Ovary (tissue), 10 donors: ENCODE measurements at regions of chr9 and their contacts with region 1.

Region 1: GRCh38 chr9:34328987-34329832 is at the starts of genes KIF24 and NUDT2:
- DNase-seq: peak; percentile 94 to 98 (median 95)
- H3K4me3 ChIP-seq: peak within 1 kb of the TSS; percentile 68
- H3K27ac ChIP-seq: peak within 1 kb of the TSS; percentile 76 to 85
- H3K4me1 ChIP-seq: no peaks in the 10 kb centered on the region
- H3K27me3 ChIP-seq: no peaks in the 10 kb centered on the region
- CTCF ChIP-seq: no peak
- EP300 ChIP-seq: no peak
- POLR2A ChIP-seq: peak; percentile 62
- total RNA-seq, gene KIF24: 0.53 to 3.2 (median 1.00) TPM
- total RNA-seq, gene NUDT2: 14.8 to 41.4 (median 24.8) TPM

Region 2: DNA sequence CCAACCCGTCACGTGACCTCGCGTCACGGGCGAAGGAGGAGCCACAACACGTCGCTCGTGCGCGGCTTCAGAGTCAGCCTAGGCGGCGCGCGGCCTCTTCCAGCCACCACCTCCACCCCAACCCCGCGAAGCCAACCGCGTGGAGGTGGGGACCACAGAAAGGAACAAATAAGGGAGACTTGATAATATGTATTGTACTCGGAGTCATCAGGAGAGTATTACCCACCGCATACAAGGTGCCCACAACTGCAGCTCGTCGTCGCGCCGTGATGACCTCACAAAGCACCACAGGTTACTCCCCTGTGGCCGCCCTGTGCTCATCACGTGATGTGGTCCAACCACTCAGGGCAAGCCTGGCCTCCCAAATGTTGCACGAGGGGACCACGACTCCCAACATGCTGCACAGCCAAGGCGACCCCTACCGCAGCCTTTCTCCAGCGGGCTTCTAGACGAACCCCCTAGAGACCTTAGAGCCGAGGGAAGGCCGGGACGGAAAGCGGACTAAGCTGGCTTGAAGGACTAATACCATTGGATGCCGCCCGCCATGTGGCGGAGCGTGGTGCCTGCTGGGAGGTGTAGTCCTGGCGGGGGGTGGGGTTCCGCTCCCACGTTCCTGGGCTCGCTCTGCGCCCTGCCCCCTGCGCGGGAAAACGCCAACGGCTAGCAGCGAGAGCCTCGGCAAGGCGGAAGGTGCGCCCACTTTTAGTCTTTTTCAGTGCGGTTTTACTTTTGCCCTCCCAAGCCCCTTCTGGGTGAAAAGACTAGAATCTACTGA is 280.1 kb before region 1 on chr9:
- intact Hi-C with region 1: loop called in 1 of 4 experiments (anchors 5 kb)
- DNase-seq: peak; percentile 97 to 99 (median 98)
- H3K4me3 ChIP-seq: peak overlapping the region; percentile 86
- H3K27ac ChIP-seq: peak overlapping the region; percentile 86 to 97
- H3K4me1 ChIP-seq: peaks cover 6% of the 10 kb centered on the region
- H3K27me3 ChIP-seq: no peaks in the 10 kb centered on the region
- CTCF ChIP-seq: peak in 2 of 3 donors; percentile 8 to 17
- EP300 ChIP-seq: no peak
- POLR2A ChIP-seq: peak; percentile 21

Region 3: GRCh38 chr9:34376596-34377403 is 47.6 kb after region 1 on chr9 and contains the start of gene MYORG:
- intact Hi-C with region 1: loop called in 2 of 4 experiments (anchors 2 to 5 kb)
- DNase-seq: peak; percentile 57 to 83 (median 78)
- H3K4me3 ChIP-seq: peak within 1 kb of the TSS; percentile 73
- H3K27ac ChIP-seq: no peak within 1 kb of the TSS
- H3K4me1 ChIP-seq: peaks cover 14% of the 10 kb centered on the region
- H3K27me3 ChIP-seq: no peaks in the 10 kb centered on the region
- CTCF ChIP-seq: no peak
- EP300 ChIP-seq: no peak
- POLR2A ChIP-seq: peak; percentile 25
- total RNA-seq, gene MYORG: 0.60 to 2.3 (median 1.2) TPM

Region 4: GRCh38 chr9:34396276-34397214 is 67.3 kb after region 1 on chr9:
- intact Hi-C with region 1: no loop called
- DNase-seq: no peak
- H3K4me3 ChIP-seq: no peak overlapping the region
- H3K27ac ChIP-seq: no peak overlapping the region
- H3K4me1 ChIP-seq: no peaks in the 10 kb centered on the region
- H3K27me3 ChIP-seq: no peaks in the 10 kb centered on the region
- CTCF ChIP-seq: no peak
- EP300 ChIP-seq: no peak
- POLR2A ChIP-seq: no peak

Region 5: GRCh38 chr9:34603610-34604231 is 274.5 kb after region 1 on chr9:
- intact Hi-C with region 1: loop called in 2 of 4 experiments (anchors 10 kb)
- DNase-seq: peak; percentile 73 to 91 (median 88)
- H3K4me3 ChIP-seq: no peak overlapping the region
- H3K27ac ChIP-seq: no peak overlapping the region
- H3K4me1 ChIP-seq: no peaks in the 10 kb centered on the region
- H3K27me3 ChIP-seq: no peaks in the 10 kb centered on the region
- CTCF ChIP-seq: peak; percentile 83 to 92 (median 87)
- EP300 ChIP-seq: no peak
- POLR2A ChIP-seq: no peak